GM12878 (cell line): ENCODE measurements at regions of chr7 and their contacts with region 1.

Region 1: GRCh38 chr7:64686493-64687184 is 20.7 kb downstream of the ZNF107 start:
- DNase-seq: no peak
- ATAC-seq: peak; percentile 59
- H3K4me3 ChIP-seq: no peak overlapping the region
- H3K27ac ChIP-seq: no peak overlapping the region
- H3K4me1 ChIP-seq: peaks cover 11% of the 10 kb centered on the region
- H3K27me3 ChIP-seq: no peaks in the 10 kb centered on the region
- CTCF ChIP-seq: no peak
- EP300 ChIP-seq: no peak
- POLR2A ChIP-seq: no peak
- RAD21 ChIP-seq: no peak

Region 2: GRCh38 chr7:64562626-64563275 is 123.9 kb before region 1 on chr7 and contains the start of gene ZNF680:
- CTCF ChIA-PET with region 1: no interaction called
- POLR2A ChIA-PET with region 1: no interaction called
- RAD21 ChIA-PET with region 1: no interaction called
- SMC1A ChIA-PET with region 1: no interaction called
- in situ Hi-C with region 1: loop called (anchors 10 kb)
- intact Hi-C with region 1: no loop called
- DNase-seq: peak; percentile 75
- ATAC-seq: peak; percentile 99
- H3K4me3 ChIP-seq: peak within 1 kb of the TSS; percentile 74
- H3K27ac ChIP-seq: peak within 1 kb of the TSS; percentile 75
- H3K4me1 ChIP-seq: no peaks in the 10 kb centered on the region
- H3K27me3 ChIP-seq: no peaks in the 10 kb centered on the region
- CTCF ChIP-seq: no peak
- EP300 ChIP-seq: no peak
- POLR2A ChIP-seq: peak; percentile 82
- RAD21 ChIP-seq: no peak
- polyA plus RNA-seq, gene ZNF680: 5.0 to 6.2 TPM

Region 3: DNA sequence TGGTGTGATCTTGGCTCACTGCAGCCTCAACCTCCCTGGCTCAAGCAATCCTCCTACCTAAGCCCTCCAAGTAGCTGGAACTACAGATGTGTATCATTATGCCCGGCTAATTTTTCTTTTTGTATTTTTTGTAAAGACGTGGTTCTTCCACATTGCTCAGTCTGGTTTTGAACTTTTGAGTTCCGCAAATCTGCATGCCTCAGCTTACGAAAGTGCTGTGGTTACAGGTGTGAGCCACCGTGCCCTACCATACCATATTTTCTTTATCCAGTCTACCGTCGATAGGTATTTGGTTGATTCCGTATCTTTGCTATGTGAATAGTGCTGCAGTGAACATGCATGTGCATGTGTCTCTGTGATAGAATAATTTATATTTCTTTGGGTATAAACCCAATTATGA is 14.2 kb before region 1 on chr7:
- CTCF ChIA-PET with region 1: interaction called, 3 read pairs
- POLR2A ChIA-PET with region 1: interaction called, 3 read pairs
- RAD21 ChIA-PET with region 1: interaction called, 3 read pairs
- SMC1A ChIA-PET with region 1: interaction called, 11 read pairs
- in situ Hi-C with region 1: no loop called
- intact Hi-C with region 1: no loop called
- DNase-seq: no peak
- ATAC-seq: no peak
- H3K4me3 ChIP-seq: no peak overlapping the region
- H3K27ac ChIP-seq: no peak overlapping the region
- H3K4me1 ChIP-seq: no peaks in the 10 kb centered on the region
- H3K27me3 ChIP-seq: no peaks in the 10 kb centered on the region
- CTCF ChIP-seq: no peak
- EP300 ChIP-seq: no peak
- POLR2A ChIP-seq: no peak
- RAD21 ChIP-seq: no peak

Region 4: GRCh38 chr7:65390588-65390987 is 703.9 kb after region 1 on chr7:
- CTCF ChIA-PET with region 1: no interaction called
- POLR2A ChIA-PET with region 1: no interaction called
- RAD21 ChIA-PET with region 1: no interaction called
- SMC1A ChIA-PET with region 1: no interaction called
- in situ Hi-C with region 1: loop called (anchors 25 kb)
- intact Hi-C with region 1: no loop called
- DNase-seq: peak; percentile 65
- ATAC-seq: peak; percentile 98
- H3K4me3 ChIP-seq: no peak overlapping the region
- H3K27ac ChIP-seq: peak overlapping the region; percentile 56
- H3K4me1 ChIP-seq: no peaks in the 10 kb centered on the region; the same call in 1 of the 2 replicates
- H3K27me3 ChIP-seq: no peaks in the 10 kb centered on the region
- CTCF ChIP-seq: no peak
- EP300 ChIP-seq: peak in 1 of 2 experiments; percentile 67; a peak in 1 of 4 replicates
- POLR2A ChIP-seq: no peak
- RAD21 ChIP-seq: no peak